Natural killer cell (primary cell): ENCODE measurements at regions of chr18 and their contacts with region 1.

Region 1: DNA sequence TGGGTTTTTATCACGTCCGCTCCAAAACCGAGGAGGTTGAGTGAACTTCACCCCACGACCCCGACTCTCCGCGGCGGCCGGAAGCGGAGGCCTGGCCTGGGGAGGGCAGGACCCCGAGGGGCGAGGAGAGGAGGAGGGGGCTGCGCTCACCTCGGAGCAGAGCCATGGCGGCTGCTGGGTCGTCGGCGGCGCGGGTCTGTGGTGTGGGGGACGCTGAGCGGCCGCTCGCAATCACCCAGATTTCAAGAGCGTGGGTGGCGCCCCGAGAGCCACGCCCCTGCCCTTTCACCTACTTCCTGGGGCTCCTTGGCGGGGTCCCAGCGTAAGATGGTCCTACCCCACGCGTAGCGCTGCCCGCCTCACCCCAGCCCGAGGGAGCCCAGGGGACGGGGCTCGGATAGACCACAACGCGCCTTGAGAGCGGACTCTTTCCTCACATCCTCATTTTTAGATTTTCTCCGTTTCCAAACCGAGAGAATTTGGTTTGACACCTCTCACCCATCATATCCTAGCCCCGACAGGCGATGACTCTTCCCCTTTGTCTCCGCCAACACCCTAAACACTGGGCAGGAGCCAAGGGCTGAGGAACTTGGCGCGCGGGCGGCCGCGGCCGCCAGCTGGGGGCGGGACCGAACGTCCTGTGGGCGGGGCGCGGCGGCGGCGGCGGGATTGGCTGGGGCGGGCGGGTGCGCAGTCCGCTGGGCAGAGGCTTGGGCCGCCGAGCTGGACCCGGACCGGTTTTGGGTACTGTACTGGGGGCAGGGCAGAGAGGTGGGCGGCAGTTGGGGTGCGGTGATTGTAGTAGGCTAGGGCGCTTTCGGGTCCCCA is at the start of gene ACAA2:
- DNase-seq: peak; percentile 83 to 88
- ATAC-seq: peak; percentile 77 to 90 (median 83)
- H3K4me3 ChIP-seq: peak within 1 kb of the TSS; percentile 93
- H3K4me3 Mint-ChIP-seq: peak within 1 kb of the TSS; percentile 99
- H3K27ac ChIP-seq: peak within 1 kb of the TSS; percentile 99
- H3K27ac Mint-ChIP-seq: peak within 1 kb of the TSS; percentile 77 to 99
- H3K4me1 ChIP-seq: peaks cover 35% of the 10 kb centered on the region
- H3K4me1 Mint-ChIP-seq: peaks cover 82 to 83% of the 10 kb centered on the region in 2 donors
- H3K27me3 ChIP-seq: no peaks in the 10 kb centered on the region
- H3K27me3 Mint-ChIP-seq: no peaks in the 10 kb centered on the region
- CTCF ChIP-seq: no peak
- total RNA-seq, gene ACAA2: 47.0 to 71.7 (median 59.2) TPM

Region 2: GRCh38 chr18:49784427-49785185 is 28.9 kb before region 1 on chr18:
- intact Hi-C with region 1: loop called (anchors 2 kb)
- DNase-seq: peak in 1 of 2 donors; percentile 9
- ATAC-seq: peak; percentile 61 to 76 (median 74)
- H3K4me3 ChIP-seq: no peak overlapping the region
- H3K4me3 Mint-ChIP-seq: peak overlapping the region; percentile 86
- H3K27ac ChIP-seq: peak overlapping the region; percentile 41
- H3K27ac Mint-ChIP-seq: peak overlapping the region; percentile 61 to 85
- H3K4me1 ChIP-seq: peaks cover 15% of the 10 kb centered on the region
- H3K4me1 Mint-ChIP-seq: peaks cover 65 to 76% of the 10 kb centered on the region in 2 donors
- H3K27me3 ChIP-seq: no peaks in the 10 kb centered on the region
- H3K27me3 Mint-ChIP-seq: no peaks in the 10 kb centered on the region
- CTCF ChIP-seq: no peak

Region 3: DNA sequence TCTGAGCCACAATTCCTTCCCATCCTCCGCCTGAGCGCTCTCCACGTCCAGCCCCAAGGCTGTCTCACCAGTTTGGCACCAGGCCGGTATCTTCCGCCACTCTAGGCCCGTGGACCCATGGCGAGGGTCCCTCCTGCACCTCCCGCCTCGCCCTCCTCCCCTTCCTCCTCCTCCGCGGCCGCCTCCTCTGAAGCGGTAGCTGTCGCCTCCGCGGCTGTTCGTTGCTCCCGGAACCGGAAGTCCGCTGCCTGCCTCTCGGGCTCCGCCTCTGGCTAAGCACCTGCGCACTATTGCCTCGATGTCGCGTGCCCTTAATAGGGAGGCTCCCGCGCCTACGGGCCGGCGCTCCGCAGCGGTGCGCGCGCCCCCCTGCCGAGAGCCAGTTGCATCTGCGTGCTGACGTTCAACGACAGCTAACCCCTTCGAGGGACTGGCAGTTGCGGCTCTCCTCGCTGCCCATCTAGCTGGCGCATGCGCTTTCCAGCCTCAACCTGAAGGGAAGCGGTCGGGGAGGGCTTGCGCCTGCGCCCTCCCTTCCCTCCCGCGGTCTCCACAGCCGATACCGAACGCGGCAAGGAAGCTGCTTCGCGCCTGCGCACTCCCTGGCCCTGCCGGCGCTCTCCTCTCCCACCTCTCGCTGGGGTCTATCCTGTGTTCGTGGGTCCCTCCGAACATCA is 467.9 kb after region 1 on chr18 and contains the start of gene MBD1:
- intact Hi-C with region 1: loop called (anchors 5 kb)
- DNase-seq: peak; percentile 94 to 100
- ATAC-seq: peak; percentile 92 to 96 (median 93)
- H3K4me3 ChIP-seq: peak within 1 kb of the TSS; percentile 89
- H3K4me3 Mint-ChIP-seq: peak within 1 kb of the TSS; percentile 94
- H3K27ac ChIP-seq: peak within 1 kb of the TSS; percentile 92
- H3K27ac Mint-ChIP-seq: peak within 1 kb of the TSS; percentile 92 to 99
- H3K4me1 ChIP-seq: peaks cover 34% of the 10 kb centered on the region
- H3K4me1 Mint-ChIP-seq: peaks cover 28 to 74% of the 10 kb centered on the region in 2 donors
- H3K27me3 ChIP-seq: no peaks in the 10 kb centered on the region
- H3K27me3 Mint-ChIP-seq: no peaks in the 10 kb centered on the region
- CTCF ChIP-seq: peak; percentile 13
- total RNA-seq, gene MBD1: 106 to 113 (median 111) TPM